ENCODE measurements at regions of chr6 and their contacts with region 1.

Region 1: DNA sequence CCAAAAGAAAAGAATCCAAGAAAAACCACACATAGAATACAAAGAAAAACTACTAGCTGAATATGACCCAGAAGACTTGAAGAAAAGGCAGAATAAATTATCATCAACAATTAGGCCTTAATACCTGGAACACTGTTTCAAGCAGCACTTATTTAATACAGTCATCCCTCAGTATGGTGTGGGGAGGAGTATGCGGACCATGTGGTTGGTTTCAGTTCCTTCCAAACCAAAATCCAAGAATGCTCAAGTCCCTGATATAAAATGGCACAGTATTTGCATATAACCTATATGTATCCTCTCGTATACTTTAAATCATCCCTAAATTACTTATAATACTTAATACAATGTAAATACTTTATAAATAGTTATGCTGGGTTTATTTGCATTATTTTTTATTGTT is 16.1 kb downstream of the CDK19 start:
- H3K4me3 ChIP-seq: no peak overlapping the region
- H3K27ac ChIP-seq: no peak overlapping the region
- H3K4me1 ChIP-seq: no peaks in the 10 kb centered on the region
- CTCF ChIP-seq: no peak

Region 2: DNA sequence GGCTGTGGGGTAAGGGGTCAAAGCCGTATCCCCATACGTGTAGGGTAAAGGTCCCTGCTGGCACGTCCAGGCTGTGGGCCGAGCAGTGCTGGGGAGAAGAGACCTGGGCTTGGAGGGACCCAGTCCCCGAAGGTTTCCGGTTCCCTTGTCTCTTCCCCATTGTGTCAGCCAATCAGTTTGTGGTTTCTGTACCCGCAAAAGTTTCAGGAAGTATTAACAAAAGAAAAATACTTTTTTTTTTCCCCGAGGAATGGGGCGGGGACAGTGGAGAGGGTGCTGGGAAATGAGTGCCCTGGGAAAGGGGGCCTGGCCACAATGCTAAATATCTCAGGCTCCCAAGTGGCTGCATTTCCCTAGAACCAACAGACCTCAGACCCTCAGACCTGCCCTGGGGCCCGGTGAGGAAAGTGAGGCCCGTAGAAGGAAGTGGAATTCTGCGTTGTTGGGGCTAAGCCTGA is 60.2 kb after region 1 on chr6:
- CTCF ChIA-PET with region 1: no interaction called
- POLR2A ChIA-PET with region 1: interaction called, 13 read pairs
- H3K4me3 ChIP-seq: no peak overlapping the region
- H3K27ac ChIP-seq: no peak overlapping the region
- H3K4me1 ChIP-seq: no peaks in the 10 kb centered on the region
- CTCF ChIP-seq: no peak